Colonic mucosa (tissue), 4 donors: ENCODE measurements at regions of chrX and their contacts with region 1.

Region 1: DNA sequence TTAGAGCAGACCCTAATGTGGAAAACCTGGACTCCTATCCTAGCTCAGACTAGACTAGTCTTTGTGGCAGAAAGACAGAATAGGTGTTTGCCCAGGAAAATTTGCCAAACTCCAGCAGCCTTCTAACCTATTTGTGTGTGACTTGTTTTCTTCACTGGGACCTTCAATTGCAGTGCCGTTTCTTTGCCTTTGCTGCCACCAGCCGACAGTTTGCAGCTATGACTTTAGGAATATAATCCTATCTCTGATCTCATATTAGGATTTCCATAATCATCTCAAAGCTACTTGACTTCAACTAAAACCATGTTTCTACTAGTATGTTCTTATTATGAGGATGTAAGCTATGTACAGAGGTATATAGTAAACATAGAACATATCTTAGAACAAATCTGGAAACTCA is 60.2 kb upstream of the PGAM4 start:
- DNase-seq: peak; percentile 27
- H3K4me3 ChIP-seq: no peak overlapping the region
- H3K27ac ChIP-seq: no peak overlapping the region
- H3K4me1 ChIP-seq: no peaks in the 10 kb centered on the region
- H3K27me3 ChIP-seq: no peaks in the 10 kb centered on the region
- CTCF ChIP-seq: peak; percentile 34

Region 2: GRCh38 chrX:77910108-77910840 is 119.4 kb before region 1 on chrX and contains the start of gene ATP7A:
- intact Hi-C with region 1: loop called (anchors 5 kb)
- DNase-seq: peak; percentile 89
- H3K4me3 ChIP-seq: peak within 1 kb of the TSS; percentile 31
- H3K27ac ChIP-seq: peak within 1 kb of the TSS; percentile 82
- H3K4me1 ChIP-seq: no peaks in the 10 kb centered on the region
- H3K27me3 ChIP-seq: no peaks in the 10 kb centered on the region
- CTCF ChIP-seq: peak; percentile 39
- total RNA-seq, gene ATP7A: 8.3 to 11.8 TPM

Region 3: GRCh38 chrX:78237134-78237533 is 207.5 kb after region 1 on chrX:
- intact Hi-C with region 1: no loop called
- DNase-seq: no peak
- H3K4me3 ChIP-seq: no peak overlapping the region
- H3K27ac ChIP-seq: no peak overlapping the region
- H3K4me1 ChIP-seq: no peaks in the 10 kb centered on the region
- H3K27me3 ChIP-seq: no peaks in the 10 kb centered on the region
- CTCF ChIP-seq: no peak